AG04450 (cell line): ENCODE measurements at regions of chr1 and their contacts with region 1.

Region 1: DNA sequence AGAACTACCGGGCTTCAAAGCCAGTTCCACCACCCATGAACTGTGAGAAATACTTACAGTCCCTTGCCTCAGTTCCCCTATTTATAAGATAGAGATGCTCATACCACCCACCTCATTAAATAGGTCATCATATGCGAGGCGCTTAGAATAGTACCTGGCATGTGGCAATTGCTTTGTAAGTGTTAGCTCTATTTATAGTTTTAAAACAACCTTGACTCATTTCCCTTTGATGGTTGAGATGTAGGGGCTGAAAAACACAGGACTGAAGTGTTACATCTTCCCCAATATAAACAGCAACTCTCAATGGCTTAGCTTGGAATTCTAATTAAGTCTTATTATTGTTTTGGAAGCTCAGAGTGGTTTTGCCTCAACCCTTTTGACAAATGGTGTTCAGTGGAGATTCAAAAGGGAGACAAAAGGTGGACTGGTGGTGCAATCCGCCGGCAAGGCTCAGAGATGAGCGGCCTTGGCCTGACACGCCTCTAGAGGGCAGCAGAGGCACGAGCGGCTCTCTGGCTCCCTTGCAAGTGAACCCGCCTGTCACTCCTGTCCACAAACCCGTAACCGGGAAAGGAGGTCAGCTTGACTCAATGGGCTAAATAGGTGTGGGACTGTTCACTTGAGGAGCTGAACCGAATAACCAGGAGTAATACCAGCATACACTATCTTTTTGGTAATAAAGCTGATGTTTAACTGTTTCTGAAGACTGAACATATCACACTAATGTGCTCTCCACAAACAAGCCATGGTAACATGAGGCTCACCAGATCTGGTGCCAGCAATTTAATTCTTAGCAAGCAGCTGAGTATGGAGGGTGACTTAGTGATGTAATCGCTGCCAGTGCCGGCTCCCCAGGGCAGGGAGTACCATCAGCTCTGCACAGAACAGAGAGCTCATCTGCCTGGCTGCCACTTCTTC is 19.5 kb upstream of the SMYD2 start:
- DNase-seq: peak; percentile 27
- H3K4me3 ChIP-seq: no peak overlapping the region; the same call in 1 of the 2 replicates
- H3K27ac ChIP-seq: no peak overlapping the region
- H3K27me3 ChIP-seq: peaks cover 5% of the 10 kb centered on the region
- CTCF ChIP-seq: peak; percentile 99

Region 2: DNA sequence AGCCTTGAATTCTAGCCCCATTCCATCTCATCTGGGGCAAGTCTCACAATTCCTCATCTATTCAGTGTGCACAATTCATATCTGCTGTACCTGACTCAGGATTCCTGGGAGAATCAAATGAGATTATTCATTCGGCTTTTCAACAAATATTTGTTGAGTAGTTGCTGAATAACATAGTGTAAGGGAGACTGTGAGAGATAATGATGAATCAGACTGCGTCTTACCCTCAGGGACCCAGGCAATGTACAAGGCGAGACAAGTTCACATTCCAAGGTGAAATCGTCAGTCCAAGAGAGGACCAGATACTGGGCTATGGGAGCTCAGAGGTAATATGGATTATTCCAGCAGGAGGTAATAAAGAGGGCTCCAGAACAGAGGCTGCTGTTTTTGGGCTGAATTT is 48.3 kb before region 1 on chr1:
- CTCF ChIA-PET with region 1: interaction called, 104 read pairs
- POLR2A ChIA-PET with region 1: no interaction called
- DNase-seq: no peak
- H3K4me3 ChIP-seq: no peak overlapping the region
- H3K27ac ChIP-seq: no peak overlapping the region
- H3K27me3 ChIP-seq: peaks cover 15% of the 10 kb centered on the region
- CTCF ChIP-seq: no peak

Region 3: GRCh38 chr1:214248311-214249085 is 13.0 kb before region 1 on chr1:
- CTCF ChIA-PET with region 1: interaction called, 113 read pairs
- POLR2A ChIA-PET with region 1: no interaction called
- DNase-seq: no peak
- H3K4me3 ChIP-seq: no peak overlapping the region
- H3K27ac ChIP-seq: no peak overlapping the region
- H3K27me3 ChIP-seq: no peaks in the 10 kb centered on the region
- CTCF ChIP-seq: no peak

Region 4: DNA sequence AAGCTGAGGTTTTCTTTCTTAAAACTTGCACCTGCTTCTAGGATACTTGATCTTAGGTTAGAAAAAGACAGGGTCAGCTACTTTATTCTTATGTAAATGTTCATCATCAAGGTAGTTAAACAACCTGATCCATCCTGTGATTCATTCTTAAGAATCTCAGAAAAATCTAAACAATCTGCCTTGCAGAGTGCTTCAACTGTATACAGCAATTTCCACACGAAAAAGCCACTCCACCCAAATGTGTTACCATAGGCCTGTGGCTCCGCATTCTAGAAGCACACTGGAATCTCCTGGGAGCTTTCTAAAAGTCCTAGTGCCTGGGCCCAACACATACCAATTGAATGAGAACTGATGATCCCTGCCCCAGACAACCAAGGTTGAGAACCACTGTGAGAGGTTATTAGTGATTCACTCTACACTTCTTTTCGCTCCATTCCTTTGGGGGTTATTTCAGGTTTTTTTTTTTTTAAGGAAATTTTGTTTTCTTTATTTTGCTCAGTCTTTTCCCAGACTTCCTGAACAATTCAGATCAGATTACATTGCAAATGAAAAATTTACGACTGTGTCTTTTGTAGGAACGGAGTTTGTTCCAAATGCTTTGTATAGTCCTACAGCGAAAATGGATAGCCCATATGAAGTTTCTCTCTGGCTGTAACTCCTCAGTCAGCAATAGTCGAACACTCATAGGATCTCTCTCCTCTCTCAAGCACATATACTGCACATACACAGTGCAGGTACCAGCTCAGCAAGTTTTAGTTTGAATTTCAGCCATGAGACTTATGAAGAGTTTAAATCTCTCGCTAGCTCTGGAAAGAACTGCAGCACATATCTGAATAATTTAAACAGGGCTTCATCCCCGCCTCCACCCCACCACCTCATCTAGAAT is 35.6 kb after region 1 on chr1:
- CTCF ChIA-PET with region 1: interaction called, 29 read pairs
- POLR2A ChIA-PET with region 1: no interaction called
- DNase-seq: peak; percentile 67
- H3K4me3 ChIP-seq: no peak overlapping the region
- H3K27ac ChIP-seq: peak overlapping the region; percentile 21
- H3K27me3 ChIP-seq: no peaks in the 10 kb centered on the region
- CTCF ChIP-seq: no peak

Region 5: DNA sequence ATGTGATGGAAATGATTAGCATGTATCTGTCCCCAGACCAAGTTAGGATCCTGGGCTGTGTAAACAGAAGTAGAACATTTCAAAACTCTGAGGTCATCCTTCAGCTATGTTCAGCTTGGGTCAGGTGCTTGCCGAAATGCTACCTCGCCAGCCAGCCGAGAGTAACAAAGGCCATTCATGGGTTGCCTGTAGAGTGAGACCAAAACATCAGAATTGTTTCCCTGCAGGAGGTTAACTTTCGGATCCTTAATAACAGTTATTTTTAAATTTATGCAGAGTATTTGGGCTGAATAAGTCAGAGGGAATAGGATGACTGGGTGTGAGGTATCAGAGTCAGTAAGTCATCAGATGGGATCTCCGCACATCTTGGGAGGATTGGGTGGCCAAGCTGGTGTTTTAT is 55.1 kb after region 1 on chr1:
- CTCF ChIA-PET with region 1: interaction called, 67 read pairs
- POLR2A ChIA-PET with region 1: no interaction called
- DNase-seq: no peak
- H3K4me3 ChIP-seq: no peak overlapping the region
- H3K27ac ChIP-seq: no peak overlapping the region
- H3K27me3 ChIP-seq: no peaks in the 10 kb centered on the region
- CTCF ChIP-seq: no peak

Region 6: DNA sequence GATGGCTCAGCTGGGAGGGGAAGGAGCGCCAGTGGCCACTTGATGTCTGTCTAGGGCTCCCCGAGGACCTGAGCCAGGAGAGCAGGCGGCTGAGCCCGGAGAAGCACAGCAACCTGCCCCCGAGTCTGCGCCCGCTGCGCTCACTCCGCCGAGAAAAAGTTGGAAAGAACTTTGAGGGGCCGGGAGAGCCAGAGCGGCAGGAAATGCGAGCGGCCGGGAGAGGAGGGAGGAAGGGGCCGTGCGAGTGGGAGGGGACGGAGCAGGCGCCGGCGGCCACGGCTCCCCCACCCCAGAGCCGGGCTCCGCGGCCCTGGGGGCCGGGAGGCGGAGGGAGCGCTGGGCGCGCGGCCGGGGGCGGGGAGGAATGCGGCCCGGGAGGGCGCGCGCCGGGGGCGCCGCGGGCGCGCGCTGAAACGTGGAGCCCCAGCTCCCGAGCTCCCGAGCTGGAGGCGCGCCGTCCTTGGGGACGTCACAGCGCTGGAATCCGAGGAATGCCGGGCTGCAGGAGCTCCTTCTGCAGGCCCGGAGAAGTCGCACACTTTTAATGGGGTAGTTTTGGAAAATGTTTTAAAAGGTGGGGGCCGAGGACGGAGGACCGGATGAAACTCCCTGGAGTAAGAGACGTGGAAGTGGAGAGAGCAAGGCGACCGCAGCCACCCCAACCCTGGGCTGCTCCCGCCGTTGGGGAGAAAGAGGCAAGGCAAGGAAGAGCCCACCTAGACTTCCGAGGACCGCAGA is 290.1 kb after region 1 on chr1 and contains the start of gene PTPN14:
- CTCF ChIA-PET with region 1: interaction called, 11 read pairs
- POLR2A ChIA-PET with region 1: no interaction called
- DNase-seq: peak; percentile 87
- H3K4me3 ChIP-seq: peak within 1 kb of the TSS; percentile 96
- H3K27ac ChIP-seq: peak within 1 kb of the TSS; percentile 99
- H3K27me3 ChIP-seq: no peaks in the 10 kb centered on the region
- CTCF ChIP-seq: peak; percentile 51
- polyA plus RNA-seq, gene PTPN14: 30.3 and 34.2 TPM in 2 replicates

Region 7: DNA sequence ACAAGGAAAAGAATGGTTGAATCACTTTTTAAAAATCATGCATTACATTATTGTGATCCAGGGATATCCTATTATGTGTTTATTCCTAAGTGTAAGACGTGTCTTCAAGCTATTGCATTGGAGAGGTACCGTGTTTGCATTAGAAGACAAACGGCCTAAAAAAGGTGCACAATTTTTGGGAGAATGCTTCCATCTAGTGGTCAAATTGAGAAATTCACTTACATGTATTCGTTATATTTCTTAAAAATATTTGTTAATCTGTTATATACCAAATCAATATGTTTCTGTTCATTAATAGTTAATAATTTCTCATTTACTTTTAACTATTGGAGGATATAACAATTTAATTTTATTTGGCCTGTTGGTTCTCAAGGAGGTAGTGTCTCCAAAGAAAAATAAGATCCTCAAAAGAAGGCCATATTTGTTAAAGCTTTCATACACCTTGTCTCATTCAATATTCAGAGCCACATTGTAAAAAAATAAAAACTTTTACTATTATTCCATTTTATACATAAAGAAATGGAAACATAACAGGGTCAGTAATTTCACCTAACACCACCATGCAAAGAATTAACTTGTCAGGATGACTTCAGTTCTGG is 1265.2 kb after region 1 on chr1:
- CTCF ChIA-PET with region 1: interaction called, 13 read pairs
- POLR2A ChIA-PET with region 1: no interaction called
- DNase-seq: peak; percentile 29
- H3K4me3 ChIP-seq: no peak overlapping the region
- H3K27ac ChIP-seq: no peak overlapping the region
- H3K27me3 ChIP-seq: no peaks in the 10 kb centered on the region
- CTCF ChIP-seq: peak; percentile 58